WTC11 (cell line): ENCODE measurements at regions of chr6 and their contacts with region 1.

Region 1: DNA sequence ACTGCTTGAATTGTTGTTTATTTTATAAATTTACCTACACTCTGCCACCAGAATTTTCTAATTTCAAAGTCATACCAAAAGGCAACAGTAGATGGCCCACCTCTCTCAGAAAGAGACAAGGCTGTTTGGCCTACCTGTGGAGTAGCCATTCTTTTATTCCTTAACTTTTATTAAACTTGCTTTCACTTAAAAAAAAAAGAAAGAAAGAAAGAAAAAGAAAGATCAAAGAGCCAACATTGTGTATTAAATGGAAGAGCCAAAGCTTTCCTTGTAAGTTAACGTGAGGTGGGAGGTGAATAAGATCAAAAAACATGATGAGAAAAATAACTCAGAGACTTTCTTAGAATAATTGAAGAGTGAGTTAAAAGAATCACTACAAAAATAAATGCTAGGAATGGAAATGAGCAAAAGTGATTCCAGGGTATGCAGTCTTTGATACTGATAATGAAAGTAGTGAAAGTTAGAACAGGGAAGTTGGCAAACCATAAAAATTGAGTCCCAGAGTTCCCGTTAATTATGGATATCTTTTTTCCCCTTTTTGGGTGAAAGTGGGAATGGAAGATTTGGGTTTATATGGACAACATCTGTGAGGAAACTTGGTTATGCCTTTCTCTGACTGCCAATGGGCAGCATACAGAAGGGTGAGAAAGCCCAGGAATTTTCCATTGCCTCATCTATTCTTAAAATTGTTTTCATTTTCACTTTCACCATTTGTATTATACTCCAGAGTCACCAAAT is 35.9 kb upstream of the MYB start:
- DNase-seq: no peak
- ATAC-seq: peak; percentile 59
- H3K4me3 Mint-ChIP-seq: no peak overlapping the region
- H3K27ac Mint-ChIP-seq: no peak overlapping the region
- H3K4me1 Mint-ChIP-seq: peaks cover 19% of the 10 kb centered on the region
- H3K27me3 Mint-ChIP-seq: no peaks in the 10 kb centered on the region; the same call in 1 of the 2 replicates
- CTCF ChIP-seq: peak; percentile 42; the same call in 1 of the 2 replicates

Region 2: GRCh38 chr6:135162678-135163439 is 17.6 kb after region 1 on chr6:
- CTCF ChIA-PET with region 1: interaction called, 19 read pairs
- POLR2A ChIA-PET with region 1: no interaction called
- DNase-seq: peak; percentile 89
- ATAC-seq: peak; percentile 98
- H3K4me3 Mint-ChIP-seq: no peak overlapping the region
- H3K27ac Mint-ChIP-seq: no peak overlapping the region
- H3K4me1 Mint-ChIP-seq: peaks cover 7% of the 10 kb centered on the region
- H3K27me3 Mint-ChIP-seq: no peaks in the 10 kb centered on the region
- CTCF ChIP-seq: peak; percentile 96

Region 3: DNA sequence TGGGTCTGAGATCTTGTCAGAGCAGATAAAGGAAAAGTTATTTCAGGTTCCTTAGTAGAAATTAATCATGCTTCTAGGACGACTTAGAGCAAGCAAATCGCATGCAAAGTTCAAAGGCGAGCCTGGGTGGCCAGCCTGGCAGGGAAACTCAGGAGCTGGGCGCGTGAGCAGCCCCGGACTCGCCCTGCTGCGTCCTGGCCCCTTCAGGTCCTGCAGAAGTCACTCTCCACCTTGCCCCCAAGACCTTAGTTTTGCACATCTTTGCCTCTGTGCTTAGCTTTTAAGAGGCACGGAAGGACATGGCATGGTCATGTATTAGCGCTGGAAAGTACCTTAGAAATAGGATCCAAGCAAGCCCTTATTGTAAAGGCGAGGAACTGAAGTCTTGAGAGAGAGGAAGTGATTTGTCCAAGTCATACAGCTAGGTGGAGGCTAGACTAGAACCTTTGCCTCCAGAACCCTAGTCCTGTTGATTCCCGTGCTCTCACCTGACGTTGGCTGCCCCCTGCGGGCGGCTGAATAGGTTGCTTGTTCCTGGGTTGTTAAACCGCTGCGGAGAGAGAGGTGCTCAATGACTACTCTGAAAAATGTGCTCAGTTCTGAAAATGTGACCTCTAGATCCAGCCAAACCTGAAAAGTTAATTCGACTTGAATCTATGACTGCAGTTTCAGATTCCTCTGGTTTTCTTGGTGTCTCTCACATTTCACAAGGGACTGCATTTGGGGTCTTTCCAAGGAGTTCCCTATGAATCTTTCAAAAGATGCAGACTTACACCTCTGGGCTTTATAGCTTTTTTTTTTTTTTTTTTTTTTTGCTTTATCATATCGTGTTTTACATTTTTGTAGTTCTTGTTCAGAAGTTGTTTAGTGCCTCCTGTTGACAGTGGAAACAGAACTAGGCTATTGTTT is 38.6 kb after region 1 on chr6:
- CTCF ChIA-PET with region 1: interaction called, 21 read pairs
- POLR2A ChIA-PET with region 1: no interaction called
- DNase-seq: peak; percentile 79
- ATAC-seq: peak; percentile 38
- H3K4me3 Mint-ChIP-seq: peak overlapping the region; percentile 93
- H3K27ac Mint-ChIP-seq: no peak overlapping the region
- H3K4me1 Mint-ChIP-seq: peaks cover 18% of the 10 kb centered on the region
- H3K27me3 Mint-ChIP-seq: peaks cover 37% of the 10 kb centered on the region
- CTCF ChIP-seq: 0 out of 2 replicates have a peak, but pooled peaks have one; percentile 4